B cell (primary cell): ENCODE measurements at regions of chr10 and their contacts with region 1.

Region 1: DNA sequence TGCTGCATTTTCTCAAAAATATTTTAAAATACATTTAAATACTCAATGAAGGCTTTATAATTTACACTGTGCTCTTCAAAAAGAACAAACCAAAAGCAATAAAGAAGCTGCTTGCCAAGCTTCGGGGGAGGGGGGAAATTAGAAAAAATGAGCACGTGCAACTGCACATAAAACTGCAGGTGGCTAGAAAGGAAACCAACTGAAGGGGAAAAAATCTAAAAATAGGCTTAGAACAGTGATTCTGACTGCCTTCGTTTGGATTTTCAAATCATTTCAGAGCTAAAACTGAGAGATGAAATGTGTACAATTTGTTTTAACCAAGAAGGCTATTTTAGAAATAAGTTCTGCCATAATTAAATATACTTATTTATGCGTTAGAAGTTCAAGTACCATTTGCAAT is 61.4 kb downstream of the ABI1 start:
- DNase-seq: peak; percentile 80
- ATAC-seq: peak; percentile 64
- H3K4me3 ChIP-seq: peak overlapping the region in 2 of 5 experiments; percentile 25 to 59
- H3K4me3 Mint-ChIP-seq: peak overlapping the region; percentile 69
- H3K27ac ChIP-seq: peak overlapping the region; percentile 67 to 81
- H3K27ac Mint-ChIP-seq: peak overlapping the region; percentile 72
- H3K4me1 ChIP-seq: peaks cover 70 to 83% of the 10 kb centered on the region in 2 donors
- H3K4me1 Mint-ChIP-seq: peaks cover 81% of the 10 kb centered on the region
- H3K27me3 ChIP-seq: no peaks in the 10 kb centered on the region
- H3K27me3 Mint-ChIP-seq: no peaks in the 10 kb centered on the region
- CTCF ChIP-seq: no peak

Region 2: GRCh38 chr10:26296355-26296754 is 503.0 kb before region 1 on chr10:
- CTCF ChIA-PET with region 1: no interaction called
- POLR2A ChIA-PET with region 1: no interaction called
- intact Hi-C with region 1: no loop called
- DNase-seq: no peak
- ATAC-seq: no peak
- H3K4me3 ChIP-seq: no peak overlapping the region
- H3K4me3 Mint-ChIP-seq: no peak overlapping the region
- H3K27ac ChIP-seq: no peak overlapping the region
- H3K27ac Mint-ChIP-seq: no peak overlapping the region
- H3K4me1 ChIP-seq: no peaks in the 10 kb centered on the region
- H3K4me1 Mint-ChIP-seq: no peaks in the 10 kb centered on the region
- H3K27me3 ChIP-seq: peaks cover 0 to 5% (median 2%) of the 10 kb centered on the region in 4 experiments
- H3K27me3 Mint-ChIP-seq: peaks cover 28% of the 10 kb centered on the region
- CTCF ChIP-seq: no peak

Region 3: DNA sequence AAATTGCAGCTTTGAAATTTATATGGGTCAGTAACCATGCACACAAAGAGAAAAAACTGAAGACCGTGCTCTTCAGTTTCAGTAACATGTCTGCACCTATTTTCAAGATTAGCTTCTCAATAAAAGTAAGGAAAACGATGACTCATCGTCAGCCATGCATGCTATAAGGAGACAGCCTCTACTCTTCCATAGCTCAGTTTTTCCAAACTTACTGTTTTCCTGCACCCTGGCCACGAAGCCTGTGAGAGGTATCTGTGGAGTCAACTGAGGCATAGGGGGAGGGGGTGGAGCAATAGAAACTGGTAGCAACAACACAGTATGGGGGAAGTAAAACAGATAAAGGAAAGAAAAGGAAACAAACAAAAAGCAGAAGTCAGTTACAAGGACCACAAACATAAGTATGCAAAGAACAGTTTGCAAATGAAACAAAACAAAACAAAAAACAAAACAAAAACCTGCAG is 43.9 kb before region 1 on chr10:
- CTCF ChIA-PET with region 1: interaction called, 3 read pairs
- POLR2A ChIA-PET with region 1: no interaction called
- intact Hi-C with region 1: loop called (anchors 5 kb)
- DNase-seq: peak; percentile 69
- ATAC-seq: peak; percentile 74
- H3K4me3 ChIP-seq: peak overlapping the region in 1 of 5 experiments; percentile 30
- H3K4me3 Mint-ChIP-seq: peak overlapping the region; percentile 51
- H3K27ac ChIP-seq: peak overlapping the region; percentile 1 to 28
- H3K27ac Mint-ChIP-seq: peak overlapping the region; percentile 84
- H3K4me1 ChIP-seq: peaks cover 7 to 12% of the 10 kb centered on the region in 2 donors
- H3K4me1 Mint-ChIP-seq: peaks cover 20% of the 10 kb centered on the region
- H3K27me3 ChIP-seq: no peaks in the 10 kb centered on the region
- H3K27me3 Mint-ChIP-seq: no peaks in the 10 kb centered on the region
- CTCF ChIP-seq: no peak

Region 4: GRCh38 chr10:26780793-26781601 is 18.3 kb before region 1 on chr10:
- CTCF ChIA-PET with region 1: interaction called, 4 read pairs
- POLR2A ChIA-PET with region 1: no interaction called
- intact Hi-C with region 1: loop called (anchors 2 kb)
- DNase-seq: peak; percentile 73
- ATAC-seq: peak; percentile 95
- H3K4me3 ChIP-seq: peak overlapping the region in 2 of 5 experiments; percentile 12 to 15
- H3K4me3 Mint-ChIP-seq: peak overlapping the region; percentile 71
- H3K27ac ChIP-seq: peak overlapping the region; percentile 69 to 81
- H3K27ac Mint-ChIP-seq: peak overlapping the region; percentile 78
- H3K4me1 ChIP-seq: peaks cover 42 to 56% of the 10 kb centered on the region in 2 donors
- H3K4me1 Mint-ChIP-seq: peaks cover 85% of the 10 kb centered on the region
- H3K27me3 ChIP-seq: no peaks in the 10 kb centered on the region
- H3K27me3 Mint-ChIP-seq: no peaks in the 10 kb centered on the region
- CTCF ChIP-seq: no peak

Region 5: GRCh38 chr10:26810435-26811026 is 11.2 kb after region 1 on chr10:
- CTCF ChIA-PET with region 1: no interaction called
- POLR2A ChIA-PET with region 1: no interaction called
- intact Hi-C with region 1: loop called (anchors 2 kb)
- DNase-seq: no peak
- ATAC-seq: no peak
- H3K4me3 ChIP-seq: no peak overlapping the region
- H3K4me3 Mint-ChIP-seq: no peak overlapping the region
- H3K27ac ChIP-seq: no peak overlapping the region
- H3K27ac Mint-ChIP-seq: no peak overlapping the region
- H3K4me1 ChIP-seq: peaks cover 14 to 16% of the 10 kb centered on the region in 2 donors
- H3K4me1 Mint-ChIP-seq: peaks cover 52% of the 10 kb centered on the region
- H3K27me3 ChIP-seq: no peaks in the 10 kb centered on the region
- H3K27me3 Mint-ChIP-seq: no peaks in the 10 kb centered on the region
- CTCF ChIP-seq: no peak

Region 6: DNA sequence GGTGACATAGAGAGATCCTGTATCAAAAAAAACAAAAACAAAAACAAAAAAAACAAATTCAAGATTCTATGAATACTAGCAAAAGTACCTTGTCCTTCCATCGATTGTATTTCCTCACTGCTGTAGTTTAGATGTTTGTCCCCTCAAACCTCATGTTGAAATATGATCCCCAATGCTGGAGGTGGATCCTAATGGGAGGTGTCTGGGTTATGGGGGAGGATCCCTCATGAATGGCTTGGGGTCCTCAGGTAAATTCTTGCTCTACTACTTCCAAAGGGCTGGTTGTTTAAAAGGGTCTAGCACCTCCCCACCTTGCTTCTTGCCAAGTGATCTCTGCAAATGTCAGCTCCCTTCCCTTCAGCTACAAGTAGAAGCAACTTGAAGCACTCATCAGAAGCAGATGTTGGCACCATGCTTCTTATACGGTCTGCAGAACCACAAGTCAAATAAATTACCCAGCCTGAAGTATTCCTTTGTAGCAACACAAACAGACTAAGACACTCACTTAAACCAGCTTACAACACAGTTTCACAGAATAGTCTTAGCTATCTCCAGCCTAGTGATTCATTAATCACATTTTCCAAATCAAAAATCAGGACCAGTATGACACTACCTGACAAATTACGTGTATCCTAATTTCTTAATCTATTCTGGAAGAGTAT is 40.8 kb after region 1 on chr10:
- CTCF ChIA-PET with region 1: no interaction called
- POLR2A ChIA-PET with region 1: interaction called, 3 read pairs
- intact Hi-C with region 1: loop called (anchors 5 kb)
- DNase-seq: no peak
- ATAC-seq: no peak
- H3K4me3 ChIP-seq: no peak overlapping the region
- H3K4me3 Mint-ChIP-seq: peak overlapping the region; percentile 52
- H3K27ac ChIP-seq: peak overlapping the region in 1 of 2 donors; percentile 66
- H3K27ac Mint-ChIP-seq: peak overlapping the region; percentile 62
- H3K4me1 ChIP-seq: peaks cover 34 to 59% of the 10 kb centered on the region in 2 donors
- H3K4me1 Mint-ChIP-seq: peaks cover 72% of the 10 kb centered on the region
- H3K27me3 ChIP-seq: no peaks in the 10 kb centered on the region
- H3K27me3 Mint-ChIP-seq: no peaks in the 10 kb centered on the region
- CTCF ChIP-seq: no peak

Region 7: DNA sequence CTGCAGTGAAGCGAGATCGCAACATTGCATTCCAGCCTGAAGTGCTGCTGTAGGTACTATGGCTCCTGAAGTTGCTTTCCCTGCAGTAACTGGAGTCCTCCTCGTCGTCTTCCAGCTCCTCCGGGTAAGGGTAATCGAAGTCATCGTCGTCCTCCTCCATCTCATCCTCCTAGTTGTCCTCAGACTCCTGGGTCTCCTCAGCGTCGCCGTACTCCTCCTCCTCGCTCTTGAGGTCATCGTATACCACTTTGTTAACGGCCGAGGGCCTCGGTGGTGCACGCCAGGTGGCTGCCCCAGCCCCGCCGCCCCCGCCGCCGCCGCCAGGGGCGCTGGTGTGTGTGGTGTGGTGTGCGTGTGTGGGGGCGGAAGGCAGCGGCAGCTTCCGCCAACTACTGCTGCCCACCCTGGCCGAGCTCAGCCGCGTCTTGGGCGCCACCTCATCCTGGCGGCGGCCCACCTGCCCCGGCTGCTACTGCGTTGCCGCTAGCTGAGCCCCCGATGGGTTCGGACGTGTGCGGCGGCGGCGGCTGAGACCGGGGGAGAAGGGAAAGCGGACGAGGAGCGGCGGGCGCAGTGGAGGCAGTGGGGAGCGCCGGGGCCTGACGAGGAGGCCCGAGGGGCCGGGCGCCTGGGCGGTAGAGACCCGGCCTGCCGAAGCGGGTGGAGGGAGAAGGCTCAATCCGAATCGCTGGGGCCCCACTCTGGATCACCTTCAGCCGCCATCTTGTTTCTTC is 453.1 kb after region 1 on chr10:
- CTCF ChIA-PET with region 1: no interaction called
- POLR2A ChIA-PET with region 1: no interaction called
- intact Hi-C with region 1: no loop called
- DNase-seq: peak; percentile 82
- ATAC-seq: peak; percentile 99
- H3K4me3 ChIP-seq: peak overlapping the region in 4 of 5 experiments; percentile 64 to 79 (median 71)
- H3K4me3 Mint-ChIP-seq: peak overlapping the region; percentile 85
- H3K27ac ChIP-seq: peak overlapping the region; percentile 78 to 91
- H3K27ac Mint-ChIP-seq: peak overlapping the region; percentile 92
- H3K4me1 ChIP-seq: peaks cover 1 to 9% of the 10 kb centered on the region in 2 donors
- H3K4me1 Mint-ChIP-seq: peaks cover 7% of the 10 kb centered on the region
- H3K27me3 ChIP-seq: peaks cover 0 to 6% (median 2%) of the 10 kb centered on the region in 4 experiments
- H3K27me3 Mint-ChIP-seq: peaks cover 6% of the 10 kb centered on the region
- CTCF ChIP-seq: peak; percentile 90